B cell (primary cell): ENCODE measurements at regions of chr14 and their contacts with region 1.

Region 1: DNA sequence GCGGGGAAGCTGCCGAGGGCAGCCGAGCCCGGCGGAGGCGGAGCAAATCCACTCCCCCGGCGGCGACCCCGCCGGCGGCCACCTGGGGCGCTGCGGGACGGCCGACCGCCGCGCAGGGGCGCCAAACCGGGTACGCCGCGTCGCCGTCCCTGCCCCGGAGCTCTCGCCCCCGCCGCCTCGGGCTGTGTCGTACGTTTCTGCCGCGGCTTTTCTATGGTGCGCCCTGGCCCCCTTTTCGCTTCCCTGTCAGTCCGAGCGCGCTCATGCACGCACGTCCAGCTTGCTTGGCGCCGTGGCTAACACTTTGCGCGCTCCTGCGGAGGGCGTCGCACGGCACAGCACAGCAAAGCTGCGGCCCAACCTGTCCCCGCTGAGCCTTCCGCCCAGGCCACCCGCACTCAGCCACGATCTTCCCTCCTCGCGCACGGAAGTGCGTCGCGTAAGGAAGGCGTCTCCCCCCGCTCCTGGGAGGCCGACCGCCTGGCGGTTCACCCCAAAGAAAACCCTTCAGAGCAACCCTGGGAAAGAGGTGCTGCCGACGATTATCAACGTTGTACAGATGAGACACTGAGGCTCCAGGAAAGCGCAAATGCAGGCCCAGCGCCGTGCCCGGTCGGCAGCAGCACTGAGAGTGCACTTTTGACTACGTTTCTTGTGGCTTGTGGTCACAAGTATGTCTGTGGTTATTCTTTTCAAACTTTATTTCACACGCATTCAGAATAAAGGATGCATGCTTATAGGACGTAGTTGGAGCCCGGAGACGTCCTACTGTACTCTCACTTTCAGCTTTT is at the start of gene HECTD1:
- DNase-seq: peak; percentile 95
- ATAC-seq: peak; percentile 83
- H3K4me3 ChIP-seq: peak within 1 kb of the TSS; percentile 75 to 90 (median 83)
- H3K4me3 Mint-ChIP-seq: peak within 1 kb of the TSS; percentile 99
- H3K27ac ChIP-seq: peak within 1 kb of the TSS; percentile 94 to 97
- H3K27ac Mint-ChIP-seq: peak within 1 kb of the TSS; percentile 99
- H3K4me1 ChIP-seq: peaks cover 21 to 27% of the 10 kb centered on the region in 2 donors
- H3K4me1 Mint-ChIP-seq: peaks cover 37% of the 10 kb centered on the region
- H3K27me3 ChIP-seq: no peaks in the 10 kb centered on the region
- H3K27me3 Mint-ChIP-seq: no peaks in the 10 kb centered on the region
- CTCF ChIP-seq: peak; percentile 97
- total RNA-seq, gene HECTD1: 184 and 199 TPM in 2 replicates

Region 2: DNA sequence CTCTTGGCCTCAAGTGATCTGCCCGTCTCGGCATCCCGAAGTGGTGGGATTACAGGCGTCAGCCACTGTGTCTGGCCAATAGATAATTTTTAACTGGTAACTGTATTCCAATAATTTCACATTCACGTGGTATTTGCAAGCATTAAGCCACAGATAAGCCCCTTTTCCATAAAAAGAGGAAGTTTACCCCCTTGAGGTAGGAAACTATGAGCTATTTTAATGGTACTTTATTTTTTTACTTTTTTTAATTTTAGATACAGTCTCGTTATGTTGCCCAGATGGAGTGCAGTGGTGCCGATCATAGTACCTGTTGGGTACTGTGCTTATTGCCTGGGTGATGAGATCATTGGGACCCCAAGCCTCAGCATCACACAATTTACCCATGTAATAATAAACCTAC is 225.4 kb before region 1 on chr14:
- CTCF ChIA-PET with region 1: no interaction called
- POLR2A ChIA-PET with region 1: interaction called, 3 read pairs
- intact Hi-C with region 1: loop called (anchors 5 kb)
- DNase-seq: peak; percentile 39
- ATAC-seq: peak; percentile 59
- H3K4me3 ChIP-seq: no peak overlapping the region
- H3K4me3 Mint-ChIP-seq: peak overlapping the region; percentile 39
- H3K27ac ChIP-seq: peak overlapping the region; percentile 3 to 67
- H3K27ac Mint-ChIP-seq: peak overlapping the region; percentile 82
- H3K4me1 ChIP-seq: peaks cover 27 to 29% of the 10 kb centered on the region in 2 donors
- H3K4me1 Mint-ChIP-seq: peaks cover 48% of the 10 kb centered on the region
- H3K27me3 ChIP-seq: no peaks in the 10 kb centered on the region
- H3K27me3 Mint-ChIP-seq: no peaks in the 10 kb centered on the region
- CTCF ChIP-seq: no peak

Region 3: DNA sequence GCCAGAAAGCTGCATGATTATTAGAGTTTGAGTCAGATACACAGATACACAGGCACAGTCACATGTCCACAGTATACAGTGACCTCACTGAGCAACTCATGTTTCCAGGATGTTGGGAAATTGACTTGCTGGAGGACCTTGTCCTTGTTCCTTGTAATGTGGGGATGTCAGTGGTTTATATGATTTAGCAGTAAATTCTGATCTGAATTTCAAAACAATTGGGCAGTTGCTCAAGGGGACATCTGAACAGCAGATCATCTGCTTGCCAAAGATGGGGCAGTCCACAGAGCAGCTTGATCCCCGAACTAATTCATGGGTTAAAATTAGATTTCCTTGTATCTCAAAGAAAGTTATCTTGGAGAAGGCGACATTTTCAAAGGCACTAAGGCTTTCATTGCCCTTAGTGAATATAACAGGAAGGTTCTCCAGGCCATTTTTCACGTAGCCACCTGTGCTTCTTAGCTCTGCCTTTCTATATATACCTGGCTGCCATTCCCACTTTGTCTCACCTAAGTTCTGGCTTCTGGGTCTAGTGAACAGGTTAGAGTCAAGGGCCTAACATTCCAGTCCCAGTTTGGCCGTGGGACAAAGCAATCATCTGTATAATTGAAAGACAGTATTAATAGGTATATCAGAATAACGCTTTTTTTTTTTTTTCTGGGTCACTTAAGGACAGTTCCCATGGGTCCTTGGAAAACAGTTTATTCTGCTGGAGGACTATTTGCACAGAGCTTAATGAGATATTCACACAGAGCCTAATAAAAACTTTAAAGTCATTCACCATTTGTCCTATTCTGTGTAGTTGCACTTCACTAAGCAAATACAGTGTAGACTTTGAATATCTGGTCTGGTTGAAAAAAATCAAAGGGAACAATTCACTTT is 116.8 kb before region 1 on chr14:
- CTCF ChIA-PET with region 1: no interaction called
- POLR2A ChIA-PET with region 1: no interaction called
- intact Hi-C with region 1: no loop called
- DNase-seq: no peak
- ATAC-seq: no peak
- H3K4me3 ChIP-seq: no peak overlapping the region
- H3K4me3 Mint-ChIP-seq: no peak overlapping the region
- H3K27ac ChIP-seq: no peak overlapping the region
- H3K27ac Mint-ChIP-seq: no peak overlapping the region
- H3K4me1 ChIP-seq: no peaks in the 10 kb centered on the region
- H3K4me1 Mint-ChIP-seq: no peaks in the 10 kb centered on the region
- H3K27me3 ChIP-seq: no peaks in the 10 kb centered on the region
- H3K27me3 Mint-ChIP-seq: no peaks in the 10 kb centered on the region
- CTCF ChIP-seq: no peak

Region 4: DNA sequence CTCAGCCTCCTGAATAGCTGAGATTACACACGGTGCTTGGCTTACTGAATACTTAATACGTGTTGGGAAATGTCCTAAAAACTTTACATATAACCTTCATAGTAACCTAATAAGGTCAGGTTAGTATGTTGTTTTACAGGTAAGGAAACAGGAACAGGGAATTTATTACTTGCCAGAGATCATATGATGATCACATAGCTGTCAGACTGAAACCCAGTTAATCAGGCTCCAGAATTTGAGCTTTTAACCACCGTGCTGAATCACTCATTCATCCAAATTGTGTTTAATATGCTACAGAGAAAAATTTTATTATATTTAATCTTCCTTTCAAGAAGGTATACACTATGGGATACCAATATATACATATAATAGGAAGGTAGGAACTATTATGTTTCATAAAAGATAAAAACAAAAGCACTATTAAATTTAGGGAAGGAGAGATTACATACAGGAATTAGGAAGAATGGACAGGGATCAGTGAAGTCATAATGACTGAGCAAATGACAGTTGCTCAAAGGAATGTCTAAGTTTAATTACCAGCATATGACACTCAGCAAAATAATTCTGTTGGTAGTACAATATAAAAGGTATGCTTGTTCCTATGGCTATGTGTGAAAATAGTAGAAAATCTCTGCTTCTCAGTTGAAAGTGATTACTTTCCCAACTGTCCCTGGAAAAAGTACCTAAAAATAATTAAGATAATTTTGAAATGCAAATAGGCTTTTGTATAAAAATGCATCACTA is 153.1 kb after region 1 on chr14:
- CTCF ChIA-PET with region 1: interaction called, 5 read pairs
- POLR2A ChIA-PET with region 1: no interaction called
- intact Hi-C with region 1: loop called (anchors 1 kb)
- DNase-seq: no peak
- ATAC-seq: no peak
- H3K4me3 ChIP-seq: no peak overlapping the region
- H3K4me3 Mint-ChIP-seq: no peak overlapping the region
- H3K27ac ChIP-seq: no peak overlapping the region
- H3K27ac Mint-ChIP-seq: no peak overlapping the region
- H3K4me1 ChIP-seq: peaks cover 3% of the 10 kb centered on the region in 2 donors
- H3K4me1 Mint-ChIP-seq: peaks cover 5% of the 10 kb centered on the region
- H3K27me3 ChIP-seq: no peaks in the 10 kb centered on the region
- H3K27me3 Mint-ChIP-seq: no peaks in the 10 kb centered on the region
- CTCF ChIP-seq: no peak

Region 5: GRCh38 chr14:31456841-31457664 is 249.1 kb after region 1 on chr14 and contains the start of gene DTD2:
- CTCF ChIA-PET with region 1: no interaction called
- POLR2A ChIA-PET with region 1: interaction called, 3 read pairs
- intact Hi-C with region 1: loop called (anchors 1 kb)
- DNase-seq: peak; percentile 95
- ATAC-seq: peak; percentile 99
- H3K4me3 ChIP-seq: peak within 1 kb of the TSS; percentile 63 to 87 (median 71)
- H3K4me3 Mint-ChIP-seq: peak within 1 kb of the TSS; percentile 98
- H3K27ac ChIP-seq: peak within 1 kb of the TSS; percentile 72 to 82
- H3K27ac Mint-ChIP-seq: peak within 1 kb of the TSS; percentile 93
- H3K4me1 ChIP-seq: peaks cover 8 to 13% of the 10 kb centered on the region in 2 donors
- H3K4me1 Mint-ChIP-seq: peaks cover 32% of the 10 kb centered on the region
- H3K27me3 ChIP-seq: no peaks in the 10 kb centered on the region
- H3K27me3 Mint-ChIP-seq: no peaks in the 10 kb centered on the region
- CTCF ChIP-seq: no peak
- total RNA-seq, gene DTD2: 12.5 and 14.1 TPM in 2 replicates